HepG2 (cell line): ENCODE measurements at regions of chr19 and their contacts with region 1.

Region 1: GRCh38 chr19:16572332-16573211 is at the start of gene SLC35E1:
- DNase-seq: peak; percentile 96
- ATAC-seq: peak; percentile 97
- H3K4me3 ChIP-seq: peak within 1 kb of the TSS; percentile 83 to 96 (median 95)
- H3K27ac ChIP-seq: peak within 1 kb of the TSS; percentile 72
- H3K4me1 ChIP-seq: peaks cover 42% of the 10 kb centered on the region
- H3K27me3 ChIP-seq: no peaks in the 10 kb centered on the region; a peak in 1 of 5 replicates
- CTCF ChIP-seq: 0 out of 2 replicates have a peak, but pooled peaks have one; percentile 5
- EP300 ChIP-seq: no peak
- POLR2A ChIP-seq: peak; percentile 89 to 91
- RAD21 ChIP-seq: no peak
- total RNA-seq, gene SLC35E1: 17.2 and 21.2 TPM in 2 replicates

Region 2: DNA sequence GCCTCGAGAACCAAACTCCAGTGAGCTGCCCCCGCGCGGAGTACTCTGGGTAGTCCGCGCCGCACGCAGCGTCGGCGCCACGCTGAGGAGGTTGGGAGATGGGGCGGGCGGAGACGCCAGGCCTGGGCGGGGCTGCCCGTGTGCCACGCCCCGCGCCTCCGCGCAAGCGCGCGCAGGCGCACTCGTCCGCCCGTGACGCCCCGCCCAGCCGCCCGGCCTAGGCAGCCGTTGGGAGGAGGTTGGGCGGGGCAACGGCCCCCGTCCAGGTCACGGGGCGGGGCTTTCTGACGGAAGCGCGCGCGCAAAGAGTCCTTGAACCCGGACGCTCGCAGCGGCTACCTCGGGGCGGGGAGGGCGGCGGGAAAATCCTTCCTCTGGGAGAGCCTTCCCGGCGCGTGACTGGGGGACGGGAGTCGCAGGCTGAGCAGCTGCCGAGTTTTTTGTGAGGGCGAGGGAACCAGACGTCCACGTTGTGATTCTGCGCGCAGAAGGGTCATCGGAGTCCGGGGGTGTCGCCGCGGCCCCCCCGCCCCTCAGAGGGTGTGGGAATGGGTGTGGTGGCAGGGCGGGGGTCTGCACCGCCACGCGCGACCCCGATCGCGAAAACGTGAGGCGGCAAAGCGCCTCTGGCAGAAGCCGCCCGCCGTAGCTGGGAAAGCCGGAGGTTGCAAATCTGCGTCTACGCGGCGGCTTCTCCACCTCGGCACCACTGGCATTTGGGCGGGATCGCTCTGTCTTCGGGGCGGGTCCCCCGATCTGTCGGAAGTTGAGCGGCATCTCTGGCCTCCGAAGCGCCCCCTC is 55.8 kb after region 1 on chr19 and contains the start of gene MED26:
- CTCF ChIA-PET with region 1: no interaction called
- POLR2A ChIA-PET with region 1: no interaction called
- in situ Hi-C with region 1: loop called (anchors 5 kb)
- intact Hi-C with region 1: loop called (anchors 5 kb)
- DNase-seq: peak; percentile 86
- ATAC-seq: peak; percentile 89
- H3K4me3 ChIP-seq: peak within 1 kb of the TSS; percentile 84 to 98 (median 97)
- H3K27ac ChIP-seq: peak within 1 kb of the TSS; percentile 96
- H3K4me1 ChIP-seq: peaks cover 48% of the 10 kb centered on the region
- H3K27me3 ChIP-seq: no peaks in the 10 kb centered on the region; a peak in 1 of 5 replicates
- CTCF ChIP-seq: 0 out of 2 replicates have a peak, but pooled peaks have one; percentile 9
- EP300 ChIP-seq: no peak
- POLR2A ChIP-seq: peak; percentile 80 to 83
- RAD21 ChIP-seq: peak; percentile 52
- total RNA-seq, gene MED26: 3.3 and 3.8 TPM in 2 replicates